ENCODE measurements at regions of chr15 and their contacts with region 1.

Region 1: DNA sequence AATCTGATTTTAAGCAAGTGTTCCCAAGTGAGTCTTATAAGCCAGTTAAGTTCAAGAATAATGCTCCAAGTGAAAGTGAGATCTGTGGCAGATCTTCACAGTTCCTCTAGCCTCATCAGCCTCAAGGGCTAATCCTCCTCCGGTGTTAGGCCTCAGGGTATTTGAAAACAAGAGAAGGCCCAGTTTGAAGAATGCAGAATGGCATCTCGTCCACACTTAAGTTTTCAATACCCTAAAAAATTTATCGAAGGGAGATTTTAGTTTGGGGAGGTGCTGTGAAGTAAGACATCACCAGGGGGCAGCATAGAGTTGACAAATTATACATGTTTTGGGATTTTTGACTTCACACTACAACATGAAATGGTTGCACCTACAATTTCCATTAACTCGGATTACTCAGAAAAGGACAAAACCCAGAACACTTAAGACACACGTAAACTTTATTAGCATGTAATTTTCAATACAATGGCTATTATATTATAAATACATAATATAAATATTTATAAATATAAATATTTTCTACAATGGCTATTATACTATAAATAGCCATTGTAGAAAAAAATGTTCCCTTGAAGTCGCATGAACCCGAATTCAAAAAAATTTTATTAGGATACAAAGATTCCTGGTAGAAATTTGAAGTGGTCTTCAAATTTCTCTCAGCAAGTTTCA is 2.3 kb upstream of the TMEM266 start:
- DNase-seq: no peak
- ATAC-seq: peak; percentile 48 to 70 (median 66)
- H3K4me3 ChIP-seq: no peak overlapping the region
- H3K27ac ChIP-seq: no peak overlapping the region
- H3K4me1 ChIP-seq: peaks cover 0 to 7% (median 0%) of the 10 kb centered on the region in 4 donors
- H3K27me3 ChIP-seq: no peaks in the 10 kb centered on the region
- CTCF ChIP-seq: peak; percentile 66 to 79 (median 72)
- POLR2A ChIP-seq: no peak

Region 2: GRCh38 chr15:76139368-76140073 is 82.1 kb after region 1 on chr15:
- intact Hi-C with region 1: loop called in 1 of 2 experiments (anchors 5 kb)
- DNase-seq: peak in 2 of 3 donors; percentile 47 to 70
- ATAC-seq: peak; percentile 85 to 95 (median 91)
- H3K4me3 ChIP-seq: no peak overlapping the region
- H3K27ac ChIP-seq: no peak overlapping the region
- H3K4me1 ChIP-seq: no peaks in the 10 kb centered on the region
- H3K27me3 ChIP-seq: no peaks in the 10 kb centered on the region
- CTCF ChIP-seq: peak; percentile 82 to 91 (median 88)
- POLR2A ChIP-seq: no peak

Region 3: GRCh38 chr15:76150971-76151598 is 93.6 kb after region 1 on chr15:
- intact Hi-C with region 1: loop called in 1 of 2 experiments (anchors 10 kb)
- DNase-seq: peak; percentile 67 to 71 (median 70)
- ATAC-seq: peak; percentile 84 to 91 (median 87)
- H3K4me3 ChIP-seq: no peak overlapping the region
- H3K27ac ChIP-seq: no peak overlapping the region
- H3K4me1 ChIP-seq: no peaks in the 10 kb centered on the region
- H3K27me3 ChIP-seq: no peaks in the 10 kb centered on the region
- CTCF ChIP-seq: peak; percentile 66 to 89 (median 87)
- POLR2A ChIP-seq: no peak

Region 4: DNA sequence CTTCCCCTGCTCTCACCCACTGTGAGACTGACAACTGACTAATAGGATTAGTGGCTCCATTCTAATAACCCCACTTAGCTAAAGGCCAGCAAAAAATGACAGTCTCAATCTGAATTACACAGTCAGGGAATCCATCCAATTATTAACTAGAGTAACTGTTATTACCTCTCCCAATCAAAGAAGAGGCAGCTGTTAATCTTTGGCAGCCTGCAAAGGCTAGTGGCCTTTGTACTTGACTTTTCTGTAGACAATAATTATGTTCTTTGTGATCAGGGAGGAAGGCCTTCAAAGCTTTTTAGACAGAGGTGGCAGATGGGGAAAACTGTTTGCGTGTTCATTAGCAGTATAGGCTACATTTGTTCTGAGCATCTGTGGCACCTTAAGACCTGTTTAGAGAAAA is 456.8 kb after region 1 on chr15:
- intact Hi-C with region 1: no loop called
- DNase-seq: no peak
- ATAC-seq: peak; percentile 82 to 97 (median 90)
- H3K4me3 ChIP-seq: no peak overlapping the region
- H3K27ac ChIP-seq: no peak overlapping the region
- H3K4me1 ChIP-seq: peaks cover 0 to 15% (median 2%) of the 10 kb centered on the region in 4 donors
- H3K27me3 ChIP-seq: no peaks in the 10 kb centered on the region
- CTCF ChIP-seq: no peak
- POLR2A ChIP-seq: no peak

Measured in right lobe of liver (tissue), 6 donors.